Mammary epithelial cell (primary cell): ENCODE measurements at regions of chr11 and their contacts with region 1.

Region 1: GRCh38 chr11:113289431-113290187 is 24.8 kb upstream of the TTC12 start:
- DNase-seq: peak; percentile 41
- H3K4me3 ChIP-seq: no peak overlapping the region
- H3K27ac ChIP-seq: no peak overlapping the region
- H3K4me1 ChIP-seq: no peaks in the 10 kb centered on the region
- H3K27me3 ChIP-seq: peaks cover 2% of the 10 kb centered on the region
- CTCF ChIP-seq: peak; percentile 97 to 99

Region 2: GRCh38 chr11:112440518-112440917 is 849.1 kb before region 1 on chr11:
- CTCF ChIA-PET with region 1: no interaction called
- dilution Hi-C with region 1: no loop called
- in situ Hi-C with region 1: no loop called
- intact Hi-C with region 1: loop called (anchors 1 kb)
- DNase-seq: peak; percentile 19
- H3K4me3 ChIP-seq: no peak overlapping the region
- H3K27ac ChIP-seq: no peak overlapping the region
- H3K4me1 ChIP-seq: no peaks in the 10 kb centered on the region
- H3K27me3 ChIP-seq: peaks cover 10% of the 10 kb centered on the region
- CTCF ChIP-seq: peak; percentile 44 to 45

Region 3: DNA sequence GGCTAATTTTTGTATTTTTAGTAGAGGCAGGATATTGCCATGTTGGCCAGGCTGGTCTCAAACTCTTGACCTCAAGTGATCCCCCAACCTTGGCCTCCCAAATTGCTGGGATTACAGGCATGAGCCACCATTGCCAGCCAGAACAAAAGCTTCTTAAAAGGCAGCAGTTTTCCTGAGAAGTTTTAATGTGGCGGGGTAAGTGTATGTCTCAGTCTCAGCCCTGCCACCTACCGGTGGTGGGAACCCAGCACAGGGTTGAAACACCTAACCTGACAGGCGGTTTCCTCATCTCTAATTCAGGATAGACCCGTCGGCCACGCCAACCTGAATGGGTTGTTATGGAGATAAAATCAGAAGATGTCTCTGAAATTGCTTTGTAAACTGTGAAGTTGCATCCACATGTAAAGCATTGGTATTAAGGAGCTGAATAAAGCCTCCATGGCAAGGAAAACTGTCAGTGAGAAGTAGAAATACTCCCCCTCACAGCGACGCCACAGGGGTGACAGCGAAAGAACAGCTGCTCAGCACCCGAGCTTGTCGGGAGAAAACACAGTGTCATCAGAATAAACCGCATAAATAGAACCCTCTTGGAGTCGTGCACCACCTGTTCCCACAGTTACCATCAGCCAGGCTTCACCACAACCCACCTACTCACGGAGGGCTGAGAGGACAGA is 494.3 kb before region 1 on chr11:
- CTCF ChIA-PET with region 1: interaction called, 11 read pairs
- dilution Hi-C with region 1: no loop called
- in situ Hi-C with region 1: loop called (anchors 25 kb)
- intact Hi-C with region 1: loop called (anchors 1 kb)
- DNase-seq: peak; percentile 53
- H3K4me3 ChIP-seq: no peak overlapping the region
- H3K27ac ChIP-seq: no peak overlapping the region
- H3K4me1 ChIP-seq: no peaks in the 10 kb centered on the region
- H3K27me3 ChIP-seq: no peaks in the 10 kb centered on the region
- CTCF ChIP-seq: peak; percentile 87

Region 4: DNA sequence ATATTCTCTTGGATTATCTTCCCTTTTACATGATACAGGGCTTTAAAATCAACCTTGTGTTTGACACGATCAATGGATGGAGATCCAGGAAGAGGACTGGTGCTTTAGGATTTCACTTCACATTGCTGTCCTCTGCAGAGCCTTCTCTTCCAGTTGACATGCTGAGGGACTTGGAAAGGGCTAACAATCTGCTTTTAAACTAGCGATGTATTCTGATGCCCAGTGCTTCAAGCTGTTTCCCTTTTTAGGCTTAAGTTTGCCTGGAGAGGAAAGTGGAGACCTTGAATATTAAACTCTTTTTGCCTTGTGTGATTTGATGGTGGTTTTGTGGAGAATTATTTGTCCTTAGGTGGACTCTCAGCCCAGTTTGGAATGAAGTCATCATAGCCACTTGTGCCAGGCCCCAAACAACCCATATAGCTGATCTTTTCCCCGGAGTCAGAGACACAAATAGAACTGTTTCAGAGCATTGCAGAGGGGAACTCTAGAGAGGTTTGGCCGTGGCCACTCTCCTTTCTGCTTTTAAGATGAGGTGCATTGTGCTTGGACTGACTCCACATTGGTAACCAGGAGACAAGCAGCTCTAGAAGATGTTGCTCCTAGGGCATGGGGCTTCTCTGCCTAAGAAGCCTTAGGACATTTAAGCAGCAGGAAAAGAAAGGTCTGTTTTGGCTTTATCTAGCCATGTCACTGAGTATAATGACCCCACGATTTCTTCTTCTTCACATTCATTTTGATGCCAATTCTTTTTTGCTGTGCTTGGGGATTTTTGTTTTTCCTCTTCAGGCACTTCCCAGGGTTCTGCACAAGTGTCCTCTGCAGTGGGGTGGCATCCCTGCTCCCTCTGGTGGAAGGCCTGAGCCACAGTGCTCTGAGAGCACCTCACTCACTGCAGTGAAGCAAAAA is 175.6 kb before region 1 on chr11:
- CTCF ChIA-PET with region 1: no interaction called
- dilution Hi-C with region 1: no loop called
- in situ Hi-C with region 1: loop called in 1 of 2 experiments (anchors 25 kb)
- intact Hi-C with region 1: loop called (anchors 1 kb)
- DNase-seq: peak; percentile 49
- H3K4me3 ChIP-seq: no peak overlapping the region
- H3K27ac ChIP-seq: no peak overlapping the region
- H3K4me1 ChIP-seq: no peaks in the 10 kb centered on the region
- H3K27me3 ChIP-seq: peaks cover 7% of the 10 kb centered on the region
- CTCF ChIP-seq: peak; percentile 76 to 93

Region 5: GRCh38 chr11:113163291-113164030 is 126.1 kb before region 1 on chr11:
- CTCF ChIA-PET with region 1: no interaction called
- dilution Hi-C with region 1: no loop called
- in situ Hi-C with region 1: no loop called
- intact Hi-C with region 1: loop called (anchors 1 kb)
- DNase-seq: no peak
- H3K4me3 ChIP-seq: no peak overlapping the region
- H3K27ac ChIP-seq: no peak overlapping the region
- H3K4me1 ChIP-seq: no peaks in the 10 kb centered on the region
- H3K27me3 ChIP-seq: no peaks in the 10 kb centered on the region
- CTCF ChIP-seq: peak; percentile 5 to 22

Region 6: GRCh38 chr11:113242767-113243397 is 46.7 kb before region 1 on chr11:
- CTCF ChIA-PET with region 1: no interaction called
- dilution Hi-C with region 1: no loop called
- in situ Hi-C with region 1: no loop called
- intact Hi-C with region 1: no loop called
- DNase-seq: peak; percentile 39
- H3K4me3 ChIP-seq: no peak overlapping the region
- H3K27ac ChIP-seq: no peak overlapping the region
- H3K4me1 ChIP-seq: no peaks in the 10 kb centered on the region
- H3K27me3 ChIP-seq: no peaks in the 10 kb centered on the region
- CTCF ChIP-seq: no peak

Region 7: DNA sequence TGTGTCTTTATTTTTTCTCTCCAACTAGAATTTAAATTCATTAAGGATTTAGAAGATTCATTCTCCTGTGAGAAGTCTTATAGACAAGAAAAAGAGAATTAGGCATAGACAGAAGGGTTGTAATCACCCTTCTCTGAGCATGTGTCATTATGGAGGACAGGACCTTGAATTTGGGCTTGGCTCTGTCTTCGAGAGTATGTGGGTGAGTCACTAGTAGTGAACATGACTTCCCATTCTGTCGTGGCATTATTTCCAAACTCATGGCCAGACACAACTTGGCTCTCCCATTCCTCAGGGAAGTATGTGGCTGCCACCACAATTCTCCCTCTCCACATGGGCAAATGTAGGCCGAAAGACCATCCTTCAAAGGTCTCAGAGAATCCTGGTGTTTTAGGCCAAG is 83.7 kb after region 1 on chr11:
- CTCF ChIA-PET with region 1: no interaction called
- dilution Hi-C with region 1: no loop called
- in situ Hi-C with region 1: no loop called
- intact Hi-C with region 1: no loop called
- DNase-seq: peak; percentile 79
- H3K4me3 ChIP-seq: no peak overlapping the region
- H3K27ac ChIP-seq: peak overlapping the region; percentile 60
- H3K4me1 ChIP-seq: peaks cover 56% of the 10 kb centered on the region
- H3K27me3 ChIP-seq: no peaks in the 10 kb centered on the region
- CTCF ChIP-seq: no peak